ENCODE measurements at regions of chr9 and their contacts with region 1.

Region 1: GRCh38 chr9:35051069-35051967 is 21.1 kb downstream of the VCP start:
- DNase-seq: peak; percentile 33
- H3K4me3 Mint-ChIP-seq: no peak overlapping the region
- H3K27ac Mint-ChIP-seq: peak overlapping the region; percentile 48
- H3K4me1 Mint-ChIP-seq: peaks cover 4% of the 10 kb centered on the region
- H3K27me3 Mint-ChIP-seq: no peaks in the 10 kb centered on the region

Region 2: DNA sequence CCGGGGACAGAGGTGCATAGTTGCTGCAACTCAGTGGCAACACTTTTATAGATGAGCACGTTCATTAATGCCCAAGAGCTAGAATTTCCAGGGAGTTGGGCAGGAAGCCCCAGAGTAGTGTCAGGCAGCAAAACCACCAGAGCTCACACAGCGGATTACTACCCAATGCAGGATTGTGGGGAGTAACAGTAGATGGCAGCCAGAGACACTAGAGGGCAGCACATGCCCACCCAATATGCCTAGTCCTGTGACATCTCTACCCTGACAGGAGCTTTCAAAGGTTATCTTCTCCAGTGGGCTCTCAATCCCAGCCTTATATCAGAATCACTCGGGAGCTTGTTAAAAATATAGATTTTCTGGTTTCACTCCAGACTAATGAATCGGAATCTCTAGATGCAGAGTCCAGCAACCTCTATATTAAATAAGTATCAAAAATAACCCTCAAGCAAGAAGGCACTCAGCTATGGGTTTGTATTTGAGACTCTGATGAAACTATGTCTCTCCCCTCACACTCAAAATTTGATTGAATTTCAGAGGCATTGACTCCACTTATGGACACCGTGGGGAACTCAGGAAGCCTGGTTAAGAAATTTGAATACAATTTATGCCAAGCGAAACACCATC is 151.7 kb before region 1 on chr9:
- intact Hi-C with region 1: loop called (anchors 1 kb)
- DNase-seq: peak; percentile 63
- H3K4me3 Mint-ChIP-seq: no peak overlapping the region
- H3K27ac Mint-ChIP-seq: no peak overlapping the region
- H3K4me1 Mint-ChIP-seq: no peaks in the 10 kb centered on the region
- H3K27me3 Mint-ChIP-seq: peaks cover 37% of the 10 kb centered on the region

Region 3: DNA sequence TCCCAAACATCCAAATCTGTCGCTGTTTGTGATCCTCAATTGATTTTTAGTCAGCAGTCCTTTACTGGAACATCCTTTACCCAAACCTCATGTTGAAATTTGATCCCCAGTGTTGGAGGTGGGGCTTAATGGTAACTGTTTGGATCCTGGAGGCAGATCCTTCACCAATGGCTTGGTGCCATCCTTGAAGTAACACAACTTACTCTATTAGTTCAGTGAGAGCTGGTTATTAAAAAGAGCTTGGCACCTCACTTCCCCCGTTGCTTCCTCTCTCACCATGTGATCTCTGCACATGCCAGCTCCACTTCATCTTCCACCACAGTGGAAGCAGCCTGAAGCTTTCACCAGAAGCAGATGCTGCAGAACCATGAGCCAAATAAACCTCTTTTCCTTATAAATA is 21.5 kb before region 1 on chr9:
- intact Hi-C with region 1: no loop called
- DNase-seq: no peak
- H3K4me3 Mint-ChIP-seq: no peak overlapping the region
- H3K27ac Mint-ChIP-seq: no peak overlapping the region
- H3K4me1 Mint-ChIP-seq: peaks cover 16% of the 10 kb centered on the region
- H3K27me3 Mint-ChIP-seq: no peaks in the 10 kb centered on the region